ENCODE measurements at regions of chr20 and their contacts with region 1.

Region 1: DNA sequence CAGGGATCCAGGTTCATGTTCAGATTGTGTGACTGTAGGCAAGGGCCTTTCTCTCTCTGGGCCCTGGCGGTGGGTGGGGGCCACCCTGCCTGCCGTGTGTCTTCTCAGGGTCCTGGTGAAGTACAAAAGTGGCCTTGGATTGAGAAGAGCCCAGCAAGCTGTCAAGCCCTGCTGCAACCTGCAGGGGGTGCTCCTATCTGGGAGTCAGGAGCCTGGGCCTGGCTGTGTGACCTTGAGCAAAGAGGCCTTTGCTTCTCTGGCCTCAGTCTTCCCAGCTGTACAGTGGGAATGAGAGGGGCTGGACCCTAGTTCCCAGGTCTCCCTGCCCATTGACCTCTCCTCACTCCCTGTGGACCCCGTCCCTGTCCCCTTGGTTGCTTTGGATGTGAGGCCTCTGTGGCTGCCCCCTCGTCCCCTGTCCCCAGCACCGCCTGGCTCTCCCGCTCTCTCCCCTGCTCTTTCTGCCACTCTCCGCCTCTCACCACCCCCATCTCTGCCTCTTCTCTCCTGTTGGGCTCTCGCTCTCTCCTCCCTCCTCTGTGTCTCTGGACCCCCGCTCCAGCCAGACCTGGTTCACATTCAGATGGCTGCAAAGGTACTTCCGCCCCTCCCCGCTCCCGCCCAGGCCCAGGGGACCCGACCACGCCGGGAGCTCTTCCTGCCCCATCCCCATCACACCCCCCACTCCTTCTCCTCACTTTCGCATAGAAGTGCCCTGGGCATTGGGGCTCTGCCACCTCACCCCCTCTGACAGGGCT is 46.7 kb downstream of the SRC start:
- DNase-seq: no peak
- ATAC-seq: no peak
- H3K4me3 ChIP-seq: no peak overlapping the region
- H3K27ac ChIP-seq: no peak overlapping the region
- H3K4me1 ChIP-seq: no peaks in the 10 kb centered on the region
- H3K27me3 ChIP-seq: no peaks in the 10 kb centered on the region
- CTCF ChIP-seq: no peak
- POLR2A ChIP-seq: no peak

Region 2: DNA sequence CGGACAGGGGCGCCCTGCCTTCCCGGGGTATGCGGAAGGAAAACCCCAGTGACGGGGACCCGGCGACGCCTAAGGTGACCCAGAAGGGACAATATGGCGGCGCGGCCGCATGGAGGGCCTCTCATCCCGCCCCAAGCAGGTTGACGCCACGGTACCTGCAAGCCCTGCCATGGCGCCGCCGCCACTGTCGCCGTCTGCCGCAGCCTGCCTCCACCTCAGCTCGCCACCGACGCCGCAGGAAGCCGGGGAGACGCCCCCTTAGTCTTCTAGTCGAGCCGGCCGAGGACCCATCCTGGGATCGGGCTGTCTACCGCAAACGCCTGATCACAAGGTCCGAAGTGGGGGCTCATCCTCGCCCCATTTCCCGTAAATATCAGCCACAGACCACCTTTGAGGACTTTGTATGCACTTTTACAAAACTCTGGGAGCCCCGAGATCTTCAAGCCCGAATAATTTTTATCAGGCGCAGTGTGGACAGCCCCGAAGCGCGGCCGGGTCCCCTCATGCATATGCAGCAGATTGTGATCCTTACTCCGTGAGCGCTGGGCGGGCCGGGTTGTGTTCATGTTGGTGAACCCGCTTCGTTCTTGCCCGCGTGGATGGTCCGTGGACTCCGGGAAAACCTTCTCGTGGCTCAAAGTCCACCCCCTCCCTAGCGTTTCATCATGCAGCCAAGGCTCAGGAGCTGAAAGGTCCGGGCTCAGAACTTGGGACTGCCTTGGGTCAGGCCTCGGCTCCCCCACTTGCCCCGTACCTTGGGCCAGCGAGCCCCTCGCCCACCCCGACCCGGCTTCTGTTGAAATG is 135.2 kb after region 1 on chr20 and contains the start of gene BLCAP:
- intact Hi-C with region 1: loop called (anchors 10 kb)
- DNase-seq: peak; percentile 89 to 92 (median 90)
- ATAC-seq: peak; percentile 92
- H3K4me3 ChIP-seq: peak within 1 kb of the TSS; percentile 84 to 88
- H3K27ac ChIP-seq: peak within 1 kb of the TSS; percentile 96 to 100 (median 98)
- H3K4me1 ChIP-seq: peaks cover 41% of the 10 kb centered on the region
- H3K27me3 ChIP-seq: no peaks in the 10 kb centered on the region
- CTCF ChIP-seq: peak in 1 of 7 experiments; percentile 5
- POLR2A ChIP-seq: peak; percentile 78 to 91 (median 90)
- total RNA-seq, gene BLCAP: 24.1 to 44.8 TPM

Region 3: GRCh38 chr20:37616110-37616425 is 223.5 kb after region 1 on chr20:
- intact Hi-C with region 1: no loop called
- DNase-seq: no peak
- ATAC-seq: no peak
- H3K4me3 ChIP-seq: no peak overlapping the region
- H3K27ac ChIP-seq: no peak overlapping the region
- H3K4me1 ChIP-seq: no peaks in the 10 kb centered on the region
- H3K27me3 ChIP-seq: no peaks in the 10 kb centered on the region
- CTCF ChIP-seq: peak in 1 of 7 experiments; percentile 1
- POLR2A ChIP-seq: no peak